IMR-90 (cell line): ENCODE measurements at regions of chr5 and their contacts with region 1.

Region 1: DNA sequence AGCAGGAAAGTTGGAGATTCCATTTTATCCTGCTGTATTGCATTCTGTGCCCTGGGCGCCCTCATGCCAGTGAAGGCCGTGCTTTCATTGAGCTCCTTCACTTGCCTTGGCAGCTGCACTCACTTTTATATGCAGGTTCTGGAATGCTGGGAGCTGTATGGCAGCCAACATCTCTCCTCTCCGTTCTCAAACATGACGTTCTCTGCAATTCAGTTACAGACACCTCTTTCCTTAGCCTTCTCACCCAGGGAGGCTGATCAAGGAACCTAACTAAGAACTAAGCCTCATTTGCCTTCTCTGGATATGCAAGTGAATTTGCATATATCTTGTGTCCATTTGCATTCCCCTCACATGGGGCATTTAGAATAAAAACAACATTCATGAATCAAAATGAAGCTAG is 29.4 kb upstream of the PURA start:
- DNase-seq: no peak
- ATAC-seq: no peak
- H3K4me3 ChIP-seq: no peak overlapping the region
- H3K27ac ChIP-seq: no peak overlapping the region
- H3K4me1 ChIP-seq: no peaks in the 10 kb centered on the region
- H3K27me3 ChIP-seq: peaks cover 30% of the 10 kb centered on the region
- CTCF ChIP-seq: no peak
- POLR2A ChIP-seq: no peak
- RAD21 ChIP-seq: no peak

Region 2: DNA sequence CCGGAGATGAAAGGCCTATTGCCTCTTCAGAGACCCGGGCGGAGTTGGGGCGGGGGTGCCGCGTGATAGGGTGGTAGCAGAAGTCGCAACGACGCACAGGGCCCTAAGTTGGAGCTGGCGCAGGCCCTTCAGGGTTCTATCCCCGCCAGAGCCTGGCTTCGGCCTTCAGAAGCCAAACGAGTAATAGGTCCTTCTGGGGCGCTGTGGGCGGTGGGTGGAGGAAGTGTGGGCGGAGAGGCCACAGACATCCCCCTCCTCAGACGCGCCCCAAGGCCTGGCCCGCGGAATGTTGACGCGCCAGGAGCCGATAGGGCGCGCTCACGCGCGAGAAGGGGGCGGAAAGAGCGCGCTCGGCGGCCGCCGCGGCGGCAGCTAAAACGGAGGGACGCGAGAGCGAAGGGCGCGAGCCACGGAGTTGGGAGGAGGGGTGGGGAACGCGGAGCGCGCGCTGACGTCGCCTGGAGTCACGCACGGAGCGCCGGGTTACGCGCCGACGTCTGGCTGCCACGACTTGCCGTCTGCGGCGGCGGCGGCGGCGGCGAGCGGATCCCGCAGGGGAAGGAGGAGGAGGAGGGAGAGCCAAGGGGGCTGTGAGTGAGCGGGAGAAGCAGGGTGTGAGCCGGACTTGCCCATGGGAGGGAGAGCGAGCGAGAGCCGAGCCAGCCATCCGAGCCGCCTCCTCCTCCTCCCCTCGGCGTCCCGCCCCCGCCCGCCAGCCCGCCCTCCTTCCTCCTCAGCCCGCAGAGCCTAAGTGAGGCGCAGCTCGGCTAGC is 23.0 kb after region 1 on chr5:
- CTCF ChIA-PET with region 1: no interaction called
- POLR2A ChIA-PET with region 1: no interaction called
- dilution Hi-C with region 1: no loop called
- in situ Hi-C with region 1: no loop called
- intact Hi-C with region 1: loop called (anchors 2 kb)
- DNase-seq: peak; percentile 93
- ATAC-seq: peak; percentile 96
- H3K4me3 ChIP-seq: peak overlapping the region; percentile 74
- H3K27ac ChIP-seq: peak overlapping the region; percentile 97
- H3K4me1 ChIP-seq: peaks cover 7% of the 10 kb centered on the region
- H3K27me3 ChIP-seq: peaks cover 2% of the 10 kb centered on the region
- CTCF ChIP-seq: peak; percentile 29; the same call in 1 of the 2 replicates
- POLR2A ChIP-seq: peak; percentile 69; the same call in 1 of the 2 replicates
- RAD21 ChIP-seq: no peak; the same call in 1 of the 2 replicates